Panc1 (cell line): ENCODE measurements at regions of chr6 and their contacts with region 1.

Region 1: GRCh38 chr6:37807656-37808055 is 11.9 kb upstream of the ZFAND3 start:
- DNase-seq: no peak
- ATAC-seq: peak; percentile 71
- H3K4me3 ChIP-seq: no peak overlapping the region
- H3K27ac ChIP-seq: no peak overlapping the region
- H3K4me1 ChIP-seq: peaks cover 3% of the 10 kb centered on the region; the same call in 1 of the 2 replicates
- H3K27me3 ChIP-seq: no peaks in the 10 kb centered on the region; the same call in 1 of the 2 replicates
- CTCF ChIP-seq: no peak

Region 2: GRCh38 chr6:37499433-37500293 is 308.0 kb before region 1 on chr6 and contains the start of gene CCDC167:
- CTCF ChIA-PET with region 1: no interaction called
- POLR2A ChIA-PET with region 1: no interaction called
- in situ Hi-C with region 1: no loop called
- intact Hi-C with region 1: no loop called
- DNase-seq: peak; percentile 91
- ATAC-seq: peak; percentile 97
- H3K4me3 ChIP-seq: peak within 1 kb of the TSS; percentile 75 to 76
- H3K27ac ChIP-seq: peak within 1 kb of the TSS; percentile 95
- H3K4me1 ChIP-seq: peaks cover 9% of the 10 kb centered on the region
- H3K27me3 ChIP-seq: no peaks in the 10 kb centered on the region
- CTCF ChIP-seq: no peak
- total RNA-seq, gene CCDC167: 57.6 TPM

Region 3: DNA sequence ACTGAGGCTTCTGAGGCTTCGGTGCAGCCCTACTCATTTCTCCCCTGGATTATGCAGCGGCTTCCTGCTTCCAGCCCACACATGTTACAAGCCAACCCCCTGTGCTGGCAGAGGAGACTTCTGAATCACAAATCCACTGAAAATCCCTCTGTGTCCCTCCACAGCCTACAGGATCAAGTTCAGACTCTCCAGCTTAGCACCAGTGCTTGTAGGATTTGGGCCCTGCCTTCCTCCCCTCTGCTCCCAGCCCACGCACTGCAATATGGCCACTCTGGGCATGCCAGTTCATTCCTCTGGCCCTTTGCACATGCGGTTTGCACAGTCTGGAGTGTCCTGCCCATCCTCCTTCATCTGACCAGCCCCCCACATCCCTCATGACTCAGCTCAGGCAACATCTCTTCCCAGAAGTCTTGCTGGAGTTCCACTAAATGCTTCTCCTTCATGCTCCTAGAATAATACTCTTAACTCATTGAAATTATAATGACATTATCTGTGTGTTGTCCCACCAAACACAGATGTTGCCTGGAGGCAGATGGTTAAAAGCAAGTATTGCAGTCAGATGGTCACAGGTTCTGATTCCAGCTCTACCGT is 94.0 kb before region 1 on chr6:
- CTCF ChIA-PET with region 1: no interaction called
- POLR2A ChIA-PET with region 1: interaction called, 12 read pairs
- in situ Hi-C with region 1: no loop called
- intact Hi-C with region 1: no loop called
- DNase-seq: no peak
- ATAC-seq: no peak
- H3K4me3 ChIP-seq: no peak overlapping the region
- H3K27ac ChIP-seq: no peak overlapping the region
- H3K4me1 ChIP-seq: no peaks in the 10 kb centered on the region
- H3K27me3 ChIP-seq: no peaks in the 10 kb centered on the region
- CTCF ChIP-seq: no peak